ENCODE measurements at regions of chr2 and their contacts with region 1.

Region 1: DNA sequence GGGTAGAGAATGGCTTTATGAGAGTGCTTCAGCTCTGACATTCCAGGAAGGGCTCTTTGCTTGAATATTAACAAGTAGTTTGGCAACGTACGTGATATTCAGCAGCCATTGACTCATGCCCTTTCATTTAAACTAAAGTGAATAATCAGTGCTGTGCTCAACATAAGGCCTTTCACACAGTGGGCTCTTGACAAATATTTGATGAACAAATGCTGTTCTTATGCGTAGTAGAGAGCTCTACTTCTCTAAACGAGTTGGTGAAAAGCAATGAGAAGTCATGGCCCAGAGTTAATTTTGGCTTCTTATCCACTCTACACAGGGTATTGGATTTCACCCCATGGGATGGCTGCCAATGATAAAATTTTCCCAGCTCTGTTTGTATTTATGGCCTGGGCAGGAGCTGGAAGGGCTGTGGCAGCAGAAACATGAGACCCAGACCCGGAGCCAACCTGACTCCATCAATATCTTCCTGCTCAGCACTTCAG is 338.9 kb downstream of the CCDC85A start:
- DNase-seq: peak; percentile 41
- H3K4me3 ChIP-seq: no peak overlapping the region
- H3K27ac ChIP-seq: no peak overlapping the region
- H3K4me1 ChIP-seq: no peaks in the 10 kb centered on the region
- H3K27me3 ChIP-seq: no peaks in the 10 kb centered on the region
- CTCF ChIP-seq: no peak
- POLR2A ChIP-seq: no peak

Region 2: DNA sequence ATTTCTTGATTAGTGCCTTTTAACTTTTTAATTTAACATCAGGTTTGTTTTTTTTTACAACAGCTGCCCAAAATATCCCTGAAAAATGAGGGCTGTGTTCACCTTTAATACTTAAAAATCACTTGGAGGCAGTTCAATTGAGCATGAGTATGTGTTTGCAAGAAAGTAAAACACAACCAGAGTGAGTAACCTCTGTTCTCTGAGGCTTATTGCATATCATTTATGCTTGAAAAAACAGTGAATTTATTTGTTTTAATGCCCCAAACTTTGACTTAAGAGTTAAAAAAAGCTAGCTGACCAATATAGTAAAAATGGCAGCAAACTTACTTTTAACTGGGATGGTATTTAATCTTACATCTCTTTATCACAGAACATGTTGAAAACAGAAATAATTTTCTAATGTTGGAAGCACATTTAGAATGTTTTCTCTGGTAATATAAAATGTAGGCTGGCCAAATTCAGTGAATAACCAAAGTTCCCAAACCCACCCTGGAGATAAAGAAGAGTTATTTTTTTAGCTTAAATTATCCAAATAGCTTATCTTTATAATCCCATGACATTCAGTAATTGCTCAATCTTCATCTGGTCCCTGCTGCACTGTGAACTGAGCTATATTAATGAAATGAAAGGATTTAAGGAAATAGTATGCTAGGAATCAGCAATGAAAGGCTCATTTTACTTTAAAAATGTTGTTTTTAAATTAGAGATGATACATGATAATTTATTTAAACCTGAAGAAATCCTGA is 574.3 kb before region 1 on chr2:
- intact Hi-C with region 1: no loop called
- DNase-seq: no peak
- H3K4me3 ChIP-seq: no peak overlapping the region
- H3K27ac ChIP-seq: no peak overlapping the region
- H3K4me1 ChIP-seq: no peaks in the 10 kb centered on the region
- H3K27me3 ChIP-seq: no peaks in the 10 kb centered on the region
- CTCF ChIP-seq: no peak
- POLR2A ChIP-seq: no peak

Region 3: DNA sequence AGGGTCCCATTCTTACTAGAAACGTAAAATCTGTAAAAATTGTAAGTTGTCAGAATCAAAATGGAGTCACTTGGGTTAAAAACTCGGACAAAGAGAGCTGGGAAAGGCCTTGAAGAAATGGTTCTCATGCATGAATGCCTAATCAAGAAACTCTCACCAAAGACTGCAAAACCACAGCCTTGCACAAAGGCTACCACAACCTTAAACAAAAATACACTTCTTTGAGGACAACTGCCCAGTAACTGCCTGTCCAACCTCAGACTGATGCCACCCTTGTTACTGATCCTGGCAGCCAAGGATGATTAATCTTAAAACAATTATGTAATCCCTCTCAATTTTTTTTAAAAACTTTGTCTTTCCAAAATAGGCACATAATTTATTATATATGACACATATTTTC is 39.6 kb before region 1 on chr2:
- intact Hi-C with region 1: loop called (anchors 5 kb)
- DNase-seq: no peak
- H3K4me3 ChIP-seq: no peak overlapping the region
- H3K27ac ChIP-seq: no peak overlapping the region
- H3K4me1 ChIP-seq: no peaks in the 10 kb centered on the region
- H3K27me3 ChIP-seq: no peaks in the 10 kb centered on the region
- CTCF ChIP-seq: no peak
- POLR2A ChIP-seq: no peak

Region 4: GRCh38 chr2:56705713-56706112 is 183.1 kb after region 1 on chr2:
- intact Hi-C with region 1: no loop called
- DNase-seq: no peak
- H3K4me3 ChIP-seq: no peak overlapping the region
- H3K27ac ChIP-seq: no peak overlapping the region
- H3K4me1 ChIP-seq: no peaks in the 10 kb centered on the region
- H3K27me3 ChIP-seq: no peaks in the 10 kb centered on the region
- CTCF ChIP-seq: no peak
- POLR2A ChIP-seq: no peak

Region 5: DNA sequence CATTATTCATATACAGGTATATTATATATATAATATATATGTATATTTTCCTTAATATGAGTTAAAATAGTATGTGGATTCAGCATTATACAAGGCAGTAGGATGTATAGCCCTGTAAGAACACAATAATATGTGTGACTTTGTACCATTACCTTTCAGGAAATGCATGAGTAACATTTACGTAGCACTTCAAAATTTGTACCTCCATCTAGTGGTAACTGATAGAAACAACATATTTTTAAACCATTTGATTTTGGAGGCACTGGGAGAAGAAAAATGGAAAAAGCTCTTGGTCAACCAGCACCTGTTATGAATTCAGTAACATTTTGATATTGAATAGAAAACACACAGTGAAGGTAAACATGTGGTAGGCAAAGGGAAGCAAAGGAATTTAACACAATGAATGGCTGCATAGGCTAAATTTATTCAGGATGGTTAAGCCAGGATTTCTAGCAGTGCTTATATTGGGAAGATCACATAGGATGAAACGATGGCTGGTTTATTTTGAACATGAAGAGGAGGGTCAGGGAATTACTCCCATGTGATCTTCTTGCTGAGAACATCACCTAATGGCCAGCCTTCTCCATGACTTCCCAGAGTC is 226.6 kb after region 1 on chr2:
- intact Hi-C with region 1: no loop called
- DNase-seq: no peak
- H3K4me3 ChIP-seq: no peak overlapping the region
- H3K27ac ChIP-seq: no peak overlapping the region
- H3K4me1 ChIP-seq: no peaks in the 10 kb centered on the region
- H3K27me3 ChIP-seq: no peaks in the 10 kb centered on the region
- CTCF ChIP-seq: peak in 3 of 4 experiments; percentile 46 to 61 (median 53)
- POLR2A ChIP-seq: no peak